K562 (cell line): ENCODE measurements at regions of chr2 and their contacts with region 1.

Region 1: GRCh38 chr2:210195101-210195852 is 24.1 kb upstream of the KANSL1L start:
- DNase-seq: peak; percentile 12 to 36 (median 24)
- ATAC-seq: peak; percentile 51; the same call in 2 of the 3 replicates
- H3K4me3 ChIP-seq: no peak overlapping the region
- H3K27ac ChIP-seq: no peak overlapping the region
- H3K4me1 ChIP-seq: no peaks in the 10 kb centered on the region
- H3K27me3 ChIP-seq: no peaks in the 10 kb centered on the region
- CTCF ChIP-seq: peak; percentile 30 to 74 (median 34); a peak in 3 of 6 replicates
- EP300 ChIP-seq: no peak
- POLR2A ChIP-seq: no peak
- RAD21 ChIP-seq: peak; percentile 76 to 86

Region 2: GRCh38 chr2:208392300-208393080 is 1802.8 kb before region 1 on chr2:
- CTCF ChIA-PET with region 1: no interaction called
- POLR2A ChIA-PET with region 1: no interaction called
- in situ Hi-C with region 1: loop called (anchors 25 kb)
- intact Hi-C with region 1: loop called (anchors 1 kb)
- DNase-seq: peak in 2 of 4 experiments; percentile 7 to 20
- ATAC-seq: peak; percentile 73
- H3K4me3 ChIP-seq: no peak overlapping the region
- H3K27ac ChIP-seq: no peak overlapping the region
- H3K4me1 ChIP-seq: no peaks in the 10 kb centered on the region
- H3K27me3 ChIP-seq: no peaks in the 10 kb centered on the region
- CTCF ChIP-seq: peak; percentile 12 to 49 (median 28); a peak in 2 of 6 replicates
- EP300 ChIP-seq: no peak
- POLR2A ChIP-seq: no peak
- RAD21 ChIP-seq: peak in 1 of 2 experiments; percentile 37; a peak in 2 of 4 replicates

Region 3: GRCh38 chr2:209334198-209335017 is 860.9 kb before region 1 on chr2:
- CTCF ChIA-PET with region 1: no interaction called
- POLR2A ChIA-PET with region 1: no interaction called
- in situ Hi-C with region 1: loop called (anchors 25 kb)
- intact Hi-C with region 1: loop called (anchors 5 kb)
- DNase-seq: peak; percentile 9 to 41 (median 21)
- ATAC-seq: 0 out of 3 replicates have a peak, but pooled peaks have one; percentile 42
- H3K4me3 ChIP-seq: no peak overlapping the region
- H3K27ac ChIP-seq: no peak overlapping the region
- H3K4me1 ChIP-seq: no peaks in the 10 kb centered on the region
- H3K27me3 ChIP-seq: no peaks in the 10 kb centered on the region
- CTCF ChIP-seq: peak; percentile 47 to 52 (median 51); a peak in 4 of 6 replicates
- EP300 ChIP-seq: no peak
- POLR2A ChIP-seq: no peak
- RAD21 ChIP-seq: peak; percentile 41 to 50

Region 4: DNA sequence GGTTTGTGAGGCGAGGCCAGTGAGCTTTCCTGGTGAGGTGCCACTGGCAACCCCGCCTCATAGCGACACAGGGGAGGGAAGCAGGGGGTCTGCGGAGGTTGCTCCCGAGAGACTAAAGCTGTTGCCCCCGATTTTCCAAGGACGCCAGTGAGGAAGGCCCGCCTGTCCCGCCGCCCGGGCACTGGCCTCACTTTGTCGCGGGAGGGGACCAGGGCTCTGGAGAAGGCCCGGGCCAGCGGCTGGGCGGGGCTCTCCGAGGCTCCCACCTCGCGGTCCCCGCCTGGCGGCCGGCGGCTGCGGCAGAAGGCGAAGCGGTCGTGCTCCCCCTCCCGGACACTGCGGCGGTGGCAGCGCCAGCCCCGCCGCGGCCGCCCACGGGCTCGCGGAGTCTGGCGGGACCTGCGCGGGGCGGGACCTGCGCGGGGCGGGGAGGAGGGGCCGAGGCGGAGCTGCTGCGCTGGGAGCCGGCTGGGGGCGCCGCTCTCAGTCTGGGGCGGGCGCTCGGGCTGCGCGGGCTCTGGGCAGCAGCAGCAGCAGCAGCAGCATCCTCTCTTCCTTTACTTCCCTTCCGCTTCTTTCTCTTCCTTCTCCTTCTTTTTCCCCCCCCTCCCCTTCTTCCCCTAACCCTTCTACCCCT is 771.6 kb before region 1 on chr2 and contains the start of gene MAP2:
- CTCF ChIA-PET with region 1: interaction called, 3 read pairs
- POLR2A ChIA-PET with region 1: no interaction called
- in situ Hi-C with region 1: no loop called
- intact Hi-C with region 1: loop called (anchors 10 kb)
- DNase-seq: peak; percentile 58 to 71 (median 64)
- ATAC-seq: peak; percentile 100
- H3K4me3 ChIP-seq: peak within 1 kb of the TSS; percentile 30
- H3K27ac ChIP-seq: no peak within 1 kb of the TSS
- H3K4me1 ChIP-seq: peaks cover 0 to 11% of the 10 kb centered on the region in 2 experiments; a peak in 2 of 5 replicates
- H3K27me3 ChIP-seq: no peaks in the 10 kb centered on the region
- CTCF ChIP-seq: peak; percentile 38 to 99 (median 91); a peak in 5 of 6 replicates
- EP300 ChIP-seq: no peak
- POLR2A ChIP-seq: no peak
- RAD21 ChIP-seq: peak in 1 of 2 experiments; percentile 56; a peak in 3 of 4 replicates
- polyA plus RNA-seq, gene MAP2: not detected

Region 5: DNA sequence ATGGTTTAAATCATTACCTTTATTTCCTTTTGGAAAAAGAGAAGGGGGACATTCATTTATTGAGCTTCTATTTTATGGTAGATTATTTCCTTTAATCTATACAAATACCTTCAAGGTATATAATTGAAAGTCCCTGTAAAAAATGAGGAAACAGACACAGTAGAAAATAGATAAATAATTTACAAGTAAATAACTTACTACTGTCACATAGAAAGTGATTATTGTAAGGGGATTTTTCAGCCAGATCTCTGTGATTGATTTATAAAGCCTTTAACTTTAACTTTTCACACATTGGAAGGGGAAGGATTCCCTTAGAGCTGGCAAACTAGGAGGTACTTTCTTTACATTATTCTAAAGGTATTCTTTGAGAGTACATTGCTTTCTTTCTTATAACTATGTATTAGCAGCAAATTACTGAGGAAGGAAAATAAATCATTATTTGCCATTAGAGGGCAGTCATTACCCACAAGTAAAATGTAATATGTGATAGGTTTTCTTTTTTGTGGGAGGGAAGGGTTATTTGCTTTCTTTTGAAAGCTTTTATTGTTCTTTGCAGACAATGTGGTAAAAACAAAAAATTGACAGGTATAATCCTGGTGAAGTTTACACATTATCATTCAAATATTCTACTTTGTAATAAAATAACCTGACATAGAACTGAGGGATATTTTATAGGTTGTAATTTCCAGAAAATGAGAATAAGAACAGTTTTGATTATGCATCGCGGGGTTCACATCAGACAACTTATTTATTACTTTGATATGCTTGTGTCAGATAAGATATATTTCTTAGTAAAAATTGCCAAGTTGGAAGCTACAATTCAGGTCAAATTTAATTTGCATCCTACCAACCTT is 217.7 kb before region 1 on chr2:
- CTCF ChIA-PET with region 1: interaction called, 28 read pairs
- POLR2A ChIA-PET with region 1: no interaction called
- in situ Hi-C with region 1: loop called (anchors 5 kb)
- intact Hi-C with region 1: loop called (anchors 1 kb)
- DNase-seq: peak in 2 of 4 experiments; percentile 22 to 34
- ATAC-seq: peak; percentile 51; the same call in 2 of the 3 replicates
- H3K4me3 ChIP-seq: no peak overlapping the region
- H3K27ac ChIP-seq: no peak overlapping the region
- H3K4me1 ChIP-seq: no peaks in the 10 kb centered on the region; a peak in 1 of 5 replicates
- H3K27me3 ChIP-seq: peaks cover 0 to 7% of the 10 kb centered on the region in 2 experiments; a peak in 1 of 5 replicates
- CTCF ChIP-seq: peak in 2 of 3 experiments; percentile 34 to 63; a peak in 3 of 6 replicates
- EP300 ChIP-seq: no peak
- POLR2A ChIP-seq: no peak
- RAD21 ChIP-seq: peak; percentile 81 to 82

Region 6: DNA sequence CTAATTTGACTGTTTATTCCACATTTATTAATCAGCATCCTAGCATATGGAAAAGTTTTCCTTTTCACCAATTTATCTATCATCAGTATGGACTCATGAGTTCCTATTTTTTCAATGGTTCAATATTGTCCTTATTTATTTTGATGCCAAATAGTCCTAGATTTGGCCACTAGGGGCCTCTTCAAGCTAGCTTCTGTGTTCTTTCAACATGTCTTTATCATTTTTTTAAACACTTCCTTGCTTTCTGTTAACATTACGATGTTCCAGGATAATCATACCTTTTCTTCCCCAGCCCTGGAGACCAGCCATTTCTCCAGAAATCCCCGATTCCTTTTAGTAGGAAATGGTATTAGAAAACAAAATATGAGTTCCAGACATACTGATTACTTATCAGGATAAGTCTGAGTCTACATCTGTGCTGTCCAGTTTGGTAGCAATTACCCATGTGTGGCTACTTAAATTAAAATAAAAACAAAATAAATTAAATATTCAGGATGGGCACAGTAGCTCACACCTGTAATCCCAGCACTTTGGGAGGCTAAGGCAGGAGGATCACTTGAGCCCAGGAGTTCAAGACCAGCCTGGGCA is 122.3 kb before region 1 on chr2:
- CTCF ChIA-PET with region 1: interaction called, 5 read pairs
- POLR2A ChIA-PET with region 1: no interaction called
- in situ Hi-C with region 1: no loop called
- intact Hi-C with region 1: loop called (anchors 2 kb)
- DNase-seq: peak; percentile 3 to 27 (median 14)
- ATAC-seq: peak; percentile 69; the same call in 2 of the 3 replicates
- H3K4me3 ChIP-seq: no peak overlapping the region
- H3K27ac ChIP-seq: no peak overlapping the region
- H3K4me1 ChIP-seq: no peaks in the 10 kb centered on the region
- H3K27me3 ChIP-seq: no peaks in the 10 kb centered on the region
- CTCF ChIP-seq: peak in 2 of 3 experiments; percentile 40 to 49; a peak in 3 of 6 replicates
- EP300 ChIP-seq: no peak
- POLR2A ChIP-seq: no peak
- RAD21 ChIP-seq: peak in 1 of 2 experiments; percentile 48; a peak in 2 of 4 replicates

Region 7: DNA sequence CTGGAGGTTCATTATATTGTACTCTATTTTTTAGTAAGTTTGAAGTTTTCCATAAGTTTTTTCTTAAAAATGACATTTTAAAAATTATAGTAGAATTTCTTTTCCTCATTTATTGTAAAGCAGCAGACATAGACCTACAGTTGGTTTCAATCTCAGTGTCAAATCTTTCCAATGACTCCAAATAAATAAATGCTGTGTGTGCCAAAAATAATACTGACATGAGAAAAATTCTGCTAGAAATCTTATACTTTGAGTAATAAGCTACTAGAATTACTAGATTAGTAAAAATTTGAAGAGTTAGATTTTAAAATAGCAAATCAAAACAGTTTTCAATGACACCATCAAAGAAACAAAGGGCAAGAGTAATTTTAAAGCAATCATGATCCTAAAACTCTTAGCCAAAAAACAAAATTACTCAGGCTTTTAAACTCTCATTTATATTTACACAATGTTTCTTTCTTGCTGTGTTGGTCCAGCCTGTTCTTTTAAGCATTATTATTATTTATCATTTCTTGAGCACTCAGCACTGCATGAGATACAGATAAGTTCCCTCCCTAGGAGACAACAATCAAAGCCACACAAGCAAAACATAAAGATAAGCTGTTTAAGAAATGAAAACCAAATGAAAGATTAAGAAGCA is 15.8 kb before region 1 on chr2:
- CTCF ChIA-PET with region 1: no interaction called
- POLR2A ChIA-PET with region 1: no interaction called
- in situ Hi-C with region 1: no loop called
- intact Hi-C with region 1: no loop called
- DNase-seq: no peak
- ATAC-seq: no peak
- H3K4me3 ChIP-seq: no peak overlapping the region
- H3K27ac ChIP-seq: no peak overlapping the region
- H3K4me1 ChIP-seq: no peaks in the 10 kb centered on the region
- H3K27me3 ChIP-seq: no peaks in the 10 kb centered on the region
- CTCF ChIP-seq: no peak
- EP300 ChIP-seq: no peak
- POLR2A ChIP-seq: no peak
- RAD21 ChIP-seq: no peak